Activated naive CD4-positive, alpha-beta T cell treated with anti-CD3 and anti-CD28 coated beads for 36 hours (primary cell): ENCODE measurements at regions of chr4 and their contacts with region 1.

Region 1: DNA sequence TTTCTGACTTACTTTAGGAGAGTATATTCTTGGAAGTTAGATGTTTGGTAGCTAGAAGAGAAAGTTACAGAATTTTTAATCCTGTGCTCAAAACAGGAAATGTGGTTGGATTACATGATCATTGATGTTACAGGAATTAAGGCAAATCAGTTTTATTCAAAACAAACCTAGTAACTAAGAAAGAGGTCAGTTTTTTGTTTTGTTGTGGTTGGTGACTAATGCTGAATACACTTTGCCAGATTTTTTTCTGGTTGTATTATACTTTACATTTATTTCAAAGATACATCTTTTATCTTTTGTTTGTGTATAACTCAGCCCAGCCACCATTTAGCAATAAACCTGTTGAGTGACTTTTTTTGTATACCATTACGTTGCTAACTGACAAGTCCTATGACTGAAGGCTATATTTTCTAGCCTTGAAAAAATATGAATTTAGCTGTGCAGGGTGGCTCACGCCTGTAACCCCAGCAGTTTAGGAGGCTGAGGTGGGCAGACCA is 116.7 kb downstream of the KLHL8 start:
- DNase-seq: no peak
- H3K4me3 Mint-ChIP-seq: peak overlapping the region; percentile 3
- H3K27ac Mint-ChIP-seq: peak overlapping the region; percentile 92
- H3K4me1 Mint-ChIP-seq: peaks cover 62% of the 10 kb centered on the region
- H3K27me3 Mint-ChIP-seq: no peaks in the 10 kb centered on the region

Region 2: GRCh38 chr4:87017580-87018342 is 86.0 kb before region 1 on chr4:
- CTCF ChIA-PET with region 1: no interaction called
- intact Hi-C with region 1: loop called (anchors 1 kb)
- DNase-seq: peak; percentile 37
- H3K4me3 Mint-ChIP-seq: no peak overlapping the region
- H3K27ac Mint-ChIP-seq: peak overlapping the region; percentile 88
- H3K4me1 Mint-ChIP-seq: peaks cover 82% of the 10 kb centered on the region
- H3K27me3 Mint-ChIP-seq: no peaks in the 10 kb centered on the region

Region 3: DNA sequence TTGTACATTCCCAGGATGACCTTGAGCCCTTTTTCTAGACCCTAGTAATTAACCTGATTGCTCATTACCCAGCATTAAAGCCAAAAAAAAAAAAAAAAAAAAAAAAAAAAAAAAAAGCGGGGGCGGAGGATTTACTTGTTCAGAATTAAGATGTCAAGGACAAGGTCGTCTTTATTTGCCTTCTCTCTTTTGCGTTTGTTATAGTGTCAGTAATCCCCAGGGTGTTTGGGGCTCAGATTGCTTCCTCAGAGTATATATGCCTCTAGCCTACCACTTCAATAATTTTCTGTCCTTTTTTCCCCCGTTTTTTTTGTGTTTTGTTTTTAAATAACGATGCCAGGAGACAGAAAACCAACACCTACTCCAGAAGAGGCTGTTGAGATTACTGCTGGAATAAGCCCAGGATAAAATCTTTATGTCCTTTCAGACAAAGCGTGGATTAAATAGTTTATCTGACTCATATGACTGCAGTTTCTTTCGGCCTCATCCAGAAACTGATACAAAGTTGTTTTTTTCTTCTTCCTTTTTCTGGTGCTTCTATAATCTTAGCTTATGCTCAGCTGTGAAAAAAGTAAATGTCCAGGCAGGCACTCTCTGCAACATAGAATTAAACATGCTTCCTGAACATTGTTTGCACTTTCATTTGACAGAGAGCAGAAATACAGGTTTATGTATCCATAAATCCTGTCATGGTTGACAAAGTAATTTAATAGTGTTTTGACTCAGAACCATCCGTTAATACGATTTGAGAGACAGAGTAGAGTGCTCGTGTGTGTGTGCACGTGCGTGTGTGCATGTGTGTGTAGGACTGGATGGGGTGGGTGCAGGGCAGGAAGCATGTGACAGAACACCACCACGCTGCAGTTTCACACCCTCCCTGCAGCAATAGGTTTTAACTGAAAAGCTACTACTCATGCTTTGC is 30.3 kb before region 1 on chr4:
- CTCF ChIA-PET with region 1: no interaction called
- intact Hi-C with region 1: loop called (anchors 1 kb)
- DNase-seq: peak; percentile 77
- H3K4me3 Mint-ChIP-seq: peak overlapping the region; percentile 55
- H3K27ac Mint-ChIP-seq: peak overlapping the region; percentile 67
- H3K4me1 Mint-ChIP-seq: peaks cover 44% of the 10 kb centered on the region
- H3K27me3 Mint-ChIP-seq: no peaks in the 10 kb centered on the region

Region 4: GRCh38 chr4:87220094-87220822 is 116.5 kb after region 1 on chr4 and contains the start of gene KLHL8:
- CTCF ChIA-PET with region 1: interaction called, 5 read pairs
- intact Hi-C with region 1: loop called (anchors 2 kb)
- DNase-seq: peak; percentile 85
- H3K4me3 Mint-ChIP-seq: peak within 1 kb of the TSS; percentile 84
- H3K27ac Mint-ChIP-seq: peak within 1 kb of the TSS; percentile 82
- H3K4me1 Mint-ChIP-seq: peaks cover 16% of the 10 kb centered on the region
- H3K27me3 Mint-ChIP-seq: no peaks in the 10 kb centered on the region
- total RNA-seq, gene KLHL8: 10.7 to 12.1 TPM